ENCODE measurements at regions of chr15 and their contacts with region 1.

Region 1: GRCh38 chr15:83922649-83923294 is 268.8 kb downstream of the ADAMTSL3 start:
- DNase-seq: no peak
- H3K4me3 ChIP-seq: no peak overlapping the region
- H3K27ac ChIP-seq: no peak overlapping the region
- H3K4me1 ChIP-seq: no peaks in the 10 kb centered on the region
- H3K27me3 ChIP-seq: no peaks in the 10 kb centered on the region
- CTCF ChIP-seq: no peak
- POLR2A ChIP-seq: no peak

Region 2: DNA sequence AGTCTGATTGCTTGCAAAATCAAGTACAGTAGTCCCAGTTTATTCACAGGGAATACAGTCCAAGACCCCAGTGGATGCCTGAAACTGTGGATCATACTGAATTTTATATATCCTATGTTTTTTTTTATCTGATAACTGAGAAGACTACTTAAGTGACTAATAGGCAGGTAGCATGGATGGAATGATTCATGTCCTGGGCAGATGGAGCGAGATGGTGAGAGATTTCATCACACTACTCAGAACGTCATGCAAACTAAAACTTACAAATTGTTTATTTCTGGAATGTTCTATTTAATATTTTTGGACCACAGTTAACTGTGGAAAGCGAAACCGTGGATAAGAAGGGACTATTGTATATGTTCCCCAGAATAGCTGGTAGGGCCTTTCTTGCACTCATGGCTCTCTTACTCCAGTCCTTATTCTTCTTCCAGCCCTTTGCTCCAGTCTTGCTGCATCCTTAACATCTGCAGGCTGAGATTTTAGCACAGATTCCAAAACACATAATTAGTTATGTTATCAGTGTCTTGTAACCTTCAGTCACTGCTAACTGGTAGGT is 21.2 kb after region 1 on chr15:
- intact Hi-C with region 1: loop called (anchors 1 kb)
- DNase-seq: no peak
- H3K4me3 ChIP-seq: no peak overlapping the region
- H3K27ac ChIP-seq: no peak overlapping the region
- H3K4me1 ChIP-seq: no peaks in the 10 kb centered on the region
- H3K27me3 ChIP-seq: no peaks in the 10 kb centered on the region
- CTCF ChIP-seq: no peak
- POLR2A ChIP-seq: no peak